ENCODE measurements at regions of chr9 and their contacts with region 1.

Region 1: DNA sequence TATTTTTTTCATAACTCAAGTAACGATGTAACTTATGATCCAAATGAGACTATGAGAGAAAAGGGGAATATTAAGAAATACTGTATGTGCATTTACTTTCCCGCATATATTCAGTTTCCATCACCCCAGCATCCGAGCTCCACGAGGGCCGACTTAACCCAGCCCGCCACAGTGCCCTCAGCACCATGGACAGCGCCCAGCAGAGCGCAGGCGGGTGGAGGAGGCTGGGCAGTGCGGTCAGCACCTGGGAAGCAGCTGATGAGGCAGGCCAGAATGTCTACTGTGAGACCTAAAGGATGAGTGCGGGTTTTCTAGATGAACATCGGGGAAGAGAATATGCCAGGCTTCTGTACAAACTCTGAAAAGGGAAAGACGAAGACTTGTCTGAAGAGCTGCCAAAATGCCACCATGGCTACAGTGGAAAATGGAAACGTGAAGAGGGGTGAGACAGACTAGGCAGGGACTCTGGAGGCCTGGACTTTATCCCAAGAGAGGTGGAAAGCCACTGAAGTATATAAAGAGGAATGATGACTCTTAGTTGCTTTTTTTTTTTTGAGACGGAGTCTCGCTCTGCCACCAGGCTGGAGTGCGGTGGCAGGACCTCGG is 34.5 kb upstream of the MED27 start:
- DNase-seq: no peak
- H3K4me3 ChIP-seq: no peak overlapping the region
- H3K27me3 ChIP-seq: peaks cover 2% of the 10 kb centered on the region
- CTCF ChIP-seq: no peak

Region 2: DNA sequence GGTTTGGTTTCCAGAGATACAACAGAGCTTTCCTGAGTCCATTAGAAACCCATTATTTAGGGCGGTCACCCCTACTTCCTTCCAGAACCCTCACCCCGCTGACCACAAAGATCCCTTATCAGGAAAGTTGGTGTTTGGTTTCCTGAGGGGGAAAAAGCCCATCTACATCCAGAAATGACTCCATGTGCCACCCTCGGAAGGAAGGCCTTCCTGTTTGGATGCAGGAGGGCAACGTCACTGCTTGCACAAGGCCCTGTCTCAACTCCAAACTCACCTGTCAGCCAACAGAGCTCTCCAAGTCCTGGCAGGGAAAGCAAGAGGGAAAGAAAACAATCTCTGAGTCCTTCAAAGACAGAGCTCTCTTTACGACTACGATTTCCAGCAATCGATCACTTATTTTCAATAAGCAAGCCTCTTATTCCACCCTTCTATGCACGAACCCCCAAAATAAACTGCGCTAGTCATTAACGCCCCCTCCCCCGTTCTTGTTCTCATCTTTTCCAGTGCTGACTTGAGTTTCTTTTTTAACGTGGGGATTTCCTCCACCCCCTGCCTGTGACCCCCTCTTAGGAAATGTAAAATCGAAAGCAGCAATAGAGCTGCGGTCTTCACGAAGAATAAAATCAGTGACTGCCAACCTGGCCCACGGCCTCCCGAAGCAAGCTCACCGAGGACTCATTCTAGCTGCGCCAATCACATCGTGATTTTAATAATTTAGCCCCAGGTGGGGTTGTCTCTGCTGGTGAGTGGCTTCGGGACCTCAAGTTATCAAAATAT is 11.9 kb after region 1 on chr9:
- CTCF ChIA-PET with region 1: interaction called, 4 read pairs
- POLR2A ChIA-PET with region 1: interaction called, 12 read pairs
- DNase-seq: no peak
- H3K4me3 ChIP-seq: no peak overlapping the region
- H3K27me3 ChIP-seq: peaks cover 43% of the 10 kb centered on the region
- CTCF ChIP-seq: no peak

Measured in BJ (cell line).